ENCODE measurements at regions of chr20 and their contacts with region 1.

Region 1: DNA sequence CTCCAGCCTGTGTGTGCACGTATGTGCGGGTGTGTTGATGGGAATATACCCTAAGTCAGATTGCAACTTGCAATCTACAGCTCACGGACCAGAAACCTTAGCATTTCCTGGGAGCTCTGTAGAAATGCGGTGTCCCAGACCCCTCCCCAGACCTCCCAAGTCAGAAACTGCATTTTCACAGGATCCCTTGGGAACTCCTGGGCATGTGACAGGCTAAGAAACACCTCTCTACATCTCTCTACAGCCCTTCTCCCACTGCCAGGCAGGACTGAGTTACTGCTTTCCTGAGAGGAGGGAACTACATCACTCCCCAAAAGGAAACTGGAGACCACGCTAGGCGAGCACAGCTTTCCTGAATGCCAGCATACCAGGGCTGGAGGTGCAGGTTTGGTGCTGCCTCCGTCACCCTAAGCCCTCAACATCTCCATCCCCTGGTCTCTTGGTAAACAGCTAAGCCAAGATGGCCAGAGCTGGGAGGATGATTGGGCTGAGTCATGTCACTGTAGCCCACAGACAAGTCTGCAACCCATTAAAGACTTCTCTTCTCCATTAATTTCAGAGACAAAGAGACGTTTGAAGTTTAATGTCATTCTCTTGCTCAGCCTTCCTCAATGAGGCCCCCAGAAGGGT is 194.4 kb downstream of the BMP7 start:
- DNase-seq: no peak
- H3K4me3 ChIP-seq: no peak overlapping the region
- H3K27ac ChIP-seq: no peak overlapping the region
- H3K4me1 ChIP-seq: no peaks in the 10 kb centered on the region
- H3K27me3 ChIP-seq: no peaks in the 10 kb centered on the region
- CTCF ChIP-seq: no peak

Region 2: DNA sequence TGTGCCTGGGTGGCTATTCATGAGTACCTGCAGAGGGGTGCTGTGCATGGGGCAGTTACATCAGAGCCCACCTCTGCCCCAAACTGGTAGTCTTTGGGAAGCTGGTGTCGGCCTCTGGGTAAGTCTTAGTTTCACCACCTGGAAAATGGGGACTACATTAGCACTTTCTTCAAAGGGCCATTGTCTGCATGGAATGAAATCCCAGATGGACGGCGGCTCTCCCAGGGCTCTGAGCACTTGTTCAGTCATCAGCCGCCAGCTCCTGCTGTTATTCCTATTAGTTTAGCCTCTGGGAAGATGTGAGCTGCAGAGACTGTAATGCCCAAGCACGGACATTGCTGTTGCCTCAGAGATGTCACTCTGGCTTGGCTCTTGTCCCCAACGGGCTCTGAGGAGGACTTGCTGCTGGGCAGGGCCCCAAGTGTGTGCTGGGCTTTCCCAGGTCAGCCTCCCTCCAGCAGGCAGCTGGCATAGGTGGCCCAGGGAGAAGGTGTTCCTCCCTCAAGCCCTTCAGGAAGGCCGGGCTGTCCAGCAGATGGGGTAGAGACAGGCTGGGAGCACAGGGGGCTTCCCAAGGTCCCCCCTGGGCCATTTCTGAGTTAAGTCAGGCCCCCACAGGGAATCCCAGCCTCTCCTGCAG is 174.6 kb before region 1 on chr20:
- CTCF ChIA-PET with region 1: no interaction called
- dilution Hi-C with region 1: no loop called
- in situ Hi-C with region 1: no loop called
- intact Hi-C with region 1: no loop called
- DNase-seq: no peak
- H3K4me3 ChIP-seq: no peak overlapping the region
- H3K27ac ChIP-seq: no peak overlapping the region
- H3K4me1 ChIP-seq: no peaks in the 10 kb centered on the region
- H3K27me3 ChIP-seq: peaks cover 2% of the 10 kb centered on the region
- CTCF ChIP-seq: no peak

Region 3: DNA sequence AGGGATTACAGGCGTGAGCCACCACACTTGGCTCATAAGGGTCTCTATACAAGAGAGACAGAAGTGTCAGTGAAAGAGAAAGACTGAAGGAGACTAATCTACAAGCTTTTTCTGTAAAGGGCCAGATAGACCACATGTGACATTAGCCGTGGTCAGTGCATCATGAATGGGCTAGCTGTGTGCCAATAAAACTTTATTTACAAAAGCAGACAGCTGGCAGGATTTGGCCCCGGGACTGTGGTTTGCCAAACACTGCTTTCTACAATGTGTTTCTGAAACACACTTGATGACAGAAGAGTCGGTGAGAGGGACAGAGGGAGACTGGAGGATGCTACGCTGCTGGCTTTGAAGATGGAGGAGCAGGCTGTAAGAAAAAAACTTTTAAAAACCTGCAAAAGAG is 157.5 kb before region 1 on chr20:
- CTCF ChIA-PET with region 1: no interaction called
- dilution Hi-C with region 1: no loop called
- in situ Hi-C with region 1: no loop called
- intact Hi-C with region 1: no loop called
- DNase-seq: no peak
- H3K4me3 ChIP-seq: no peak overlapping the region
- H3K27ac ChIP-seq: no peak overlapping the region
- H3K4me1 ChIP-seq: no peaks in the 10 kb centered on the region
- H3K27me3 ChIP-seq: no peaks in the 10 kb centered on the region
- CTCF ChIP-seq: no peak

Region 4: DNA sequence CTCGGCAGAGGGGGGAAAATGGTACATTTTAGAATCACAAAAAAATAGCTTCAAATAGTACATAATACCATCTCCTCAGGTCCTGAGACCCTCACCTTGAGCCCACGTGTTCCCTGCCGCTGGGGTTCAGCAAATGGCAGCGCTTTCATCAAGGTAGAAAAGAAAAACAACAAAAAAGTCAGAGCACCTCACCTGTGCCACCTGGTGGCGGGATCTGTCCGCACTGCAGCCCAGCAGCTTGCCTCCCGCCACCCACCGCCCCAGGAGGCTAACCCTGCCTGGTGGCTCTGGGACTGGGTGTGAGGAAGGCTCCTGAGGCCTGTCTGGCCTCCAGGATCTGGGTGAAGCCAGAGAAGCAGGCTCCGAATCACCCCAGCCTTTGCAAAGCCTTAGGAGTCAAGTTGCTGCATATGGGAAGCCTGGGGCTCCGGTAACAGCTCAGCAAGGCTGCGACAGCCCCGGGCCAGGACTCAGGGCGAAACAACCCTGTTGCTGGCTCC is 76.4 kb before region 1 on chr20:
- CTCF ChIA-PET with region 1: no interaction called
- dilution Hi-C with region 1: no loop called
- in situ Hi-C with region 1: no loop called
- intact Hi-C with region 1: no loop called
- DNase-seq: peak; percentile 17
- H3K4me3 ChIP-seq: no peak overlapping the region
- H3K27ac ChIP-seq: no peak overlapping the region
- H3K4me1 ChIP-seq: no peaks in the 10 kb centered on the region
- H3K27me3 ChIP-seq: no peaks in the 10 kb centered on the region
- CTCF ChIP-seq: peak; percentile 55 to 70

Region 5: DNA sequence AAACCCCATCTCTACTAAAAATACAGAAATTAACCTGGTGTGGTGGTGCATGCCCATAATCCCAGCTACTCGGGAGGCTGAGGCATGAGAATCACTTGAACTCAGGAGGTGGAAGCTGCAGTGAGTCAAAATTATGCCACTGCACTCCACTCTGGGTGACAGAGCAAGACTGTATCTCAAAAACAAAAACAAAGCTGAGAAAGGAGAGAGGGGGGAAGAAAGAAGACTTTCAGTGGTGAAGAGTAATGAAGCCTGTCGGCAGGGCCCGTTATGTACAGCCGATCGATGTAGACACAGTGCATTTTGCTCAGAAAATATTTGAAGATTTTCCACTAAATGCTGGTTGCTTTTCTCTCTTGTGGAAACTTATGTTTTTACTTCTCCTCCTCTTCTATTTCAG is 1330.8 kb after region 1 on chr20:
- CTCF ChIA-PET with region 1: interaction called, 20 read pairs
- dilution Hi-C with region 1: no loop called
- in situ Hi-C with region 1: no loop called
- intact Hi-C with region 1: no loop called
- DNase-seq: no peak
- H3K4me3 ChIP-seq: no peak overlapping the region
- H3K27ac ChIP-seq: no peak overlapping the region
- H3K4me1 ChIP-seq: peaks cover 25% of the 10 kb centered on the region
- H3K27me3 ChIP-seq: no peaks in the 10 kb centered on the region
- CTCF ChIP-seq: no peak

Measured in mammary epithelial cell (primary cell).